ENCODE measurements at regions of chr12 and their contacts with region 1.

Region 1: GRCh38 chr12:6430124-6430989 is 14.4 kb upstream of the CD27 start:
- DNase-seq: peak; percentile 41
- H3K4me3 ChIP-seq: peak overlapping the region; percentile 6
- H3K27ac ChIP-seq: peak overlapping the region; percentile 68
- H3K4me1 ChIP-seq: peaks cover 90% of the 10 kb centered on the region
- CTCF ChIP-seq: no peak

Region 2: DNA sequence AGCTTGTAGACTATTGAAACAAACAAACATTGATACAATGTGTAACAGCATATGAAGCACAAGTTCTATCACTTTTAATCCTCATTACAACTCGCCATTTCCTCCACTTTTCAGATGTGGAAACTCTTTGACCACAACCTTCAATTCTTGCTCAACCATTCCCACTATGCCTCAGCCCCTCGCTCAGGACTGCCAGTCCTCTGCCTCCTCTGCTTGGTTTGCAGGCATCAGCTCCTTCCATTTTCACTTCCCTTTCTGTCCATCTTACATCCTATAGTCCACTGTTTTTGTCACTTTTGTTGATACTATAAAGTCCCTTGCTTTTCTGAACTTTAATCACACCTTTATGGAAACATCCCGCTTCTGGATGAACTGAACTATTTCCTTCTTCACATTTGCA is 13.8 kb before region 1 on chr12:
- CTCF ChIA-PET with region 1: no interaction called
- POLR2A ChIA-PET with region 1: no interaction called
- intact Hi-C with region 1: no loop called
- DNase-seq: no peak
- H3K4me3 ChIP-seq: no peak overlapping the region
- H3K27ac ChIP-seq: no peak overlapping the region
- H3K4me1 ChIP-seq: peaks cover 6% of the 10 kb centered on the region
- CTCF ChIP-seq: no peak

Region 3: DNA sequence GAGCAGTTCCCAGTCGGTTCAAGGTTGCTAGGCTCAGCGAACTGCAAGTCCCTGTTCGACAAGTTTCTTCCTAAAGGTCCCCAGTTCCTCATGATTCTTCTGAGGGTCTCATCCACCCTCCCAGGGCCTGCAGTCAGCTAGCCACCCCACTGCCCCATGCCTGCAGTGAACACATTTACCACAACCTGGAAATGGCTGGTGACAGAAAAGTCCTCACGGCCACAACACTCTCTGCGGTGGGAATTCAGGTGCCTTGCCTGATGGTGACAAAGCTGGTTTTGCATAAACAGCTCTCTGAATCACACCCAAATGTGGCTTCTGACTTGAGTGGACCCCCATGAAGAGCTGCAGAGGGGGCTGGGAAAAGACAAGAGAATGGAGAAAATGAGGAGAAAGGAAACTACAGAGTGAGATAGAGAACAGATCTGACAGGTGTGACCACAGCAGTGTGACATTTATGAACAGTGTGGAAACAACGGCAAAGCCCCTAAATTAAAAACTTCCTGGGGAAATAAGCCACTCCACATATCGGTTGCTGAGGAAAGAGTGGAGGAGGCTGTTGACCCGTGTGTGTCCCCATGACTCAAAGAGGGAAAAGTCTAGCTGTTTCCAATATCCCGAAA is 13.1 kb after region 1 on chr12:
- CTCF ChIA-PET with region 1: interaction called, 7 read pairs
- POLR2A ChIA-PET with region 1: interaction called, 74 read pairs
- intact Hi-C with region 1: loop called (anchors 1 kb)
- DNase-seq: peak; percentile 85
- H3K4me3 ChIP-seq: peak overlapping the region; percentile 41
- H3K27ac ChIP-seq: peak overlapping the region; percentile 96
- H3K4me1 ChIP-seq: peaks cover 73% of the 10 kb centered on the region
- CTCF ChIP-seq: no peak

Region 4: GRCh38 chr12:6493497-6494257 is 63.3 kb after region 1 on chr12 and contains the start of gene NCAPD2:
- CTCF ChIA-PET with region 1: no interaction called
- POLR2A ChIA-PET with region 1: interaction called, 6 read pairs
- intact Hi-C with region 1: loop called (anchors 1 kb)
- DNase-seq: peak; percentile 98
- H3K4me3 ChIP-seq: peak within 1 kb of the TSS; percentile 91
- H3K27ac ChIP-seq: peak within 1 kb of the TSS; percentile 96
- H3K4me1 ChIP-seq: peaks cover 37% of the 10 kb centered on the region
- CTCF ChIP-seq: peak; percentile 40; the same call in 1 of the 2 replicates
- total RNA-seq, gene NCAPD2: 157 and 195 TPM in 2 replicates

Measured in OCI-LY7 (cell line).